Right ventricle myocardium superior (tissue), 1 donor: ENCODE measurements at regions of chr4 and their contacts with region 1.

Region 1: GRCh38 chr4:145936142-145936996 is 2.3 kb downstream of the ZNF827 start:
- DNase-seq: peak; percentile 69
- ATAC-seq: peak; percentile 70

Region 2: DNA sequence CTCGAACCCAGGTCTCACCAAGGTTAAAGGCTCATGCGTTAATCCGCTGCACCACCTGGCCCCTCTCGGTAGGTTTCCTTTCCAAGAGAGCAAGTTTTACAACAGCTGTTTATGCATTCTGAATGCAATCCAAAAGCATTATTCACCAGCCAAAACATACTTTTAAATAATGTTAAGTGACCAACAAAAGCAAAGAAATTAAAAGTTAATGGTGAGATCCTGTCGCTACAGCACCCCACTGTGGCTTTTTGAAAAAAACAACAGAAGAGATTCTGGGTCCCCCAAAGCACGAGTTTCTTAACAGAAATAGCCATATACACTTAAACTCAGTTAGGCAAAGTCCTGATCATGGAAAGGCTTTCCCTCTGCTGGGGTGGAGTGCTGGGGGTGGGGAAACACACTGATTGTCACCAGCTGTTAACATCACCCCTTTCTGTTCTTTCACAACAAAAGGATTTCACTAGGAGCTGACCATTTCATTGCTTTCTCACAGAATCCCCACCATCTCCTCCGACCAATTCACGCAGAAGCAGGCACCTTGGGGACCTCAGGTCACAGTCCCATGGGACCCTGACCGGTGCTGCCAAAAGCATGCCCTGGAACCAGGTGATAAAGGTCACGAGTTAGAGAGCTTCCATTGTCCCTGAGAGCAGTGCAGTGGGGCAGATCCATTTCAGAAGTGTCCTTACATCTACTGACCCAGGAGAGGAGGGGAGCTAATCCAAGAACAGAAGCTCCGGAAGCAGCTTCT is 49.0 kb before region 1 on chr4:
- intact Hi-C with region 1: loop called (anchors 2 kb)
- DNase-seq: no peak
- ATAC-seq: peak; percentile 71

Region 3: GRCh38 chr4:146175541-146176453 is 239.4 kb after region 1 on chr4 and contains the start of gene LSM6:
- intact Hi-C with region 1: loop called (anchors 10 kb)
- DNase-seq: peak; percentile 93
- ATAC-seq: peak; percentile 99
- total RNA-seq, gene LSM6: 11.8 TPM